ENCODE measurements at regions of chr12 and their contacts with region 1.

Region 1: GRCh38 chr12:97404543-97404942 is 58.1 kb upstream of the RMST start:
- DNase-seq: peak; percentile 64
- H3K4me3 Mint-ChIP-seq: no peak overlapping the region
- H3K27ac Mint-ChIP-seq: no peak overlapping the region
- H3K4me1 Mint-ChIP-seq: no peaks in the 10 kb centered on the region
- H3K27me3 Mint-ChIP-seq: no peaks in the 10 kb centered on the region
- CTCF ChIP-seq: peak; percentile 82

Region 2: GRCh38 chr12:96578526-96579125 is 825.9 kb before region 1 on chr12:
- CTCF ChIA-PET with region 1: no interaction called
- intact Hi-C with region 1: loop called (anchors 10 kb)
- DNase-seq: peak; percentile 20
- H3K4me3 Mint-ChIP-seq: no peak overlapping the region
- H3K27ac Mint-ChIP-seq: no peak overlapping the region
- H3K4me1 Mint-ChIP-seq: no peaks in the 10 kb centered on the region
- H3K27me3 Mint-ChIP-seq: no peaks in the 10 kb centered on the region
- CTCF ChIP-seq: peak; percentile 34

Region 3: GRCh38 chr12:97148941-97149559 is 255.5 kb before region 1 on chr12:
- CTCF ChIA-PET with region 1: interaction called, 12 read pairs
- intact Hi-C with region 1: loop called (anchors 1 kb)
- DNase-seq: peak; percentile 87
- H3K4me3 Mint-ChIP-seq: no peak overlapping the region
- H3K27ac Mint-ChIP-seq: no peak overlapping the region
- H3K4me1 Mint-ChIP-seq: no peaks in the 10 kb centered on the region
- H3K27me3 Mint-ChIP-seq: peaks cover 22% of the 10 kb centered on the region
- CTCF ChIP-seq: peak; percentile 81

Region 4: DNA sequence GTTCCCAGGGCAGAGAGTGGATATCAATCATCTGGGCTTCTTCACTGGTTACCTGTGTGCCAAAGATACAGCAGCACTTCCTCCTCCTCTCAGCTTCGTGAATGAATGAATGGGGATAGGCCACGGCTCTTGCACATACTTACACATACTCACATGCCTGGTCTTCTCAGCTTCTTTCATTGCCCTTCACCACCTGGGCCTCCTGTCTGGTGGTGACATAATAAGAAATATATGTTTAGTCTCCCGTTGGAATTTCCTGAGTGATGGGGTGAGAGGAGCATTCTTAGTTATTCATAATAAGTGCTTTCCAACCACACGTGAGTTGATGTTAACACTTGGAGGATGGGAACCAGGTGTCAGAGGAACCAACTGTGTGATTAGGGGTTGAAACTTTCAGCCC is 210.0 kb before region 1 on chr12:
- CTCF ChIA-PET with region 1: no interaction called
- intact Hi-C with region 1: no loop called
- DNase-seq: no peak
- H3K4me3 Mint-ChIP-seq: no peak overlapping the region
- H3K27ac Mint-ChIP-seq: no peak overlapping the region
- H3K4me1 Mint-ChIP-seq: no peaks in the 10 kb centered on the region
- H3K27me3 Mint-ChIP-seq: no peaks in the 10 kb centered on the region
- CTCF ChIP-seq: no peak

Region 5: GRCh38 chr12:97308576-97309198 is 95.9 kb before region 1 on chr12:
- CTCF ChIA-PET with region 1: interaction called, 5 read pairs
- intact Hi-C with region 1: loop called (anchors 2 kb)
- DNase-seq: peak; percentile 35
- H3K4me3 Mint-ChIP-seq: no peak overlapping the region
- H3K27ac Mint-ChIP-seq: no peak overlapping the region
- H3K4me1 Mint-ChIP-seq: peaks cover 8% of the 10 kb centered on the region
- H3K27me3 Mint-ChIP-seq: peaks cover 17% of the 10 kb centered on the region
- CTCF ChIP-seq: peak; percentile 64

Region 6: DNA sequence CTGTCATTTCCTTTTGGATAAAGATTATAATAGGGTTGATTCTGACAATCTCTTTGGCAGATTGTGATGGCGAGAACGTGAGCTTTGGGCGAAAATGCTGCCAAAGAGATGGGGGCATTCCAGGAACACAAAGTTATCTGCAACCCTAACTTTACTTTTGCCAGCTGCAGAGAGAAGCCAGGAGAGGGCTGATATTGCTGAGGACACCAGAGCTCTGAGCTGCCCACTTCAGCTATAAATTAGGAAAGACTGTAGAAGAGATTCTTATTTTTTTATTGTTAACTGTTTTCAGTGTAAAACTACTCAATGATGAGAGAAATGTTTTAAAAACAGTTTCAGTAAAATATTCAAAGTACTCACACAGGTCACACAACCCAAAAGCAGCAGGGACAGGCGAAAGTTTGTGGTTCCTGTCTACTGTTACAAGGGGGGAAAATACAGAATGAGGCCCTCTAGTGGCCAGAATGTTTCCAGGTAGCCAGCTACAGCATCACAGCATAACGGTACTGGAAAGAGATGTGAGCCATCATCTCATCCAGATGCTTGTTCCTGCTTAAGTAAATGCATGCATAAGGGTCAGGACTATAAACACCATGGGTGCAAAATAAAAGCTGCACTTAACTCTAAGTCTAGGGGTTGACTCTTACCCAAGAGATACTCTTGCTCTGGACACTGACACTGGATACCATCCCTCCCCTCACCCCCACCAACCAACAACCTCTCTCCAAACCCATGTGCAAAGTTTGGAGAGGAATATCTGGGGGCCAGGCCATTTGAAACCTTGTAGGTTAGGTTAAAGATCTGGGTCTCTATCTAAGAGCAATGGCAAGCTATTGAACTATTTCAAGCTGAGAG is 556.4 kb after region 1 on chr12:
- CTCF ChIA-PET with region 1: no interaction called
- intact Hi-C with region 1: loop called (anchors 10 kb)
- DNase-seq: peak; percentile 56
- H3K4me3 Mint-ChIP-seq: no peak overlapping the region
- H3K27ac Mint-ChIP-seq: no peak overlapping the region
- H3K4me1 Mint-ChIP-seq: no peaks in the 10 kb centered on the region
- H3K27me3 Mint-ChIP-seq: no peaks in the 10 kb centered on the region
- CTCF ChIP-seq: peak; percentile 67

Region 7: DNA sequence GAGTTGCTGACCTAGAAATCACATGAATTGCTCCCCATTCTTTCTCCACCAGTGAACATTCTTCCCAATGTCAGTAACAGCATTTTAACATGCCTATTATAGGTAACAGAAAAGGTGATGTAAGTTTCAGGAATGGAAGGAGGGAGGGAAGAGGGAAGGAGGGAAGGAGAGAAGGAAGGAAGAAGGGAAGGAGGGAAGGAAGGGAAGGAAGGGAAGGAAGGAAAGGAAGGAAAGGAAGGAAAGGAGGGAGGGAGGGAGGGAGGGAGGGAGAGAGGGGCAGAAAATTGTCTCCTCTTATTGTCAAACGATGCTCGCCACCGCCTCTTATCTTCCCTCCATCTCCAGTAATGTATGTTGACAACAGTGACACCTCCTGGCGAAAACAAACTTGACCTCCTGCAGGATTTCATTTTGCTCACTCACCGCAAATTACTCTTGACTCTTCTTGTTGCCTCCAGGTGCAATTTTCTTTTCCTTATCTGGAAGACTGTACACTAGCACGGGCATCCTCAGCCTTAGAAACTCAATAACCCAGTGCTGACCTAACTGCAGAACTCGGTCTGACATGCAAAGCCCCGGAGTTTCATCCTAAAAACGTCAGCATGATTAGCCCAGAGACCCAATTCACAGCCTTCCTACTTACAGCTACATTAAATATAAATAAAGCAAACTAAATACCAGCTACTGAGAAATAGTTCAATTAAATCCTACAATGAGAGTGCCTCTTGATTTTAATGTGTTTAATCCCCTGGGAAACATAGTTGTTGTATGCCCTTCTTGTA is 598.4 kb after region 1 on chr12:
- CTCF ChIA-PET with region 1: no interaction called
- intact Hi-C with region 1: loop called (anchors 5 kb)
- DNase-seq: peak; percentile 72
- H3K4me3 Mint-ChIP-seq: no peak overlapping the region
- H3K27ac Mint-ChIP-seq: no peak overlapping the region
- H3K4me1 Mint-ChIP-seq: peaks cover 9% of the 10 kb centered on the region
- H3K27me3 Mint-ChIP-seq: no peaks in the 10 kb centered on the region
- CTCF ChIP-seq: peak; percentile 61